HEK293T (cell line): ENCODE measurements at regions of chr4 and their contacts with region 1.

Region 1: DNA sequence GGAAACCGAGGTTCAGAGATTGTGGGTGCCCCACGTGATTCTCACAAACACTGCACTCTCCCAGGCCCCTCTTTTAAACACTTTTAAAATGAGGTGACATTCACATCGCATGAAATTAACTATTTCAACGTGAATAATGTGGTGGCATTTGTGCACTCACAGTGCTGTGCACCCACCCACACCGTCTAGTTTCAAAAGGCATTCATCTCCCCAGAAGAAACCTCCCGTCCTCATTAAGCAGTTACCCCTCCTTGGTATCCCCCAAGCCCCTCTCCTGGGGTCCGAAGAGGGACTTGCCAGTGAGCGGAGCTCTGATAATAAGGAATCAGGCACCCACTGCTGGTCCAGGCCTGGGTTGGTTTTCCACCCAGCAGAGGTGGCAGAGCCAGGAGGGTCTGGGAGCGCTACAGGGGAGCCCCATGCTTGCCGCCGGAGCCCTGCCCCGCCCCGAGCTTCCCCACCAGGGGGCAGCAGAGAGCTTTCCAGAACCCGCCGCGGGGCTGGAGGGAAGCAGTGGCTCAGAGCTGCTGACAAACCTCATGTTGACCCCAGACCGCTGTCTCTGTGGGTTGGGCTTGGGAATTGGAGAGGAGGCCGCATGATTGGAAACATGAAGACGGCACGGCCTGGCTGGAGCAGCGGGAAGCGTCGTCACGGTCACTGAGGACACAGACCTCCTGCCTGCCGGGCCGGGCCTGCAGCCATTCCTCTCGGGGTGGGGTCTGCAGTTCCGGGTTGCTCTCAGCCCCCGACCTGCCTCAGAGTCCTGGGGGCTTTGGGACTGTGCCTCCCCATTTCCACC is 27.5 kb upstream of the HTRA3 start:
- DNase-seq: peak; percentile 97

Region 2: DNA sequence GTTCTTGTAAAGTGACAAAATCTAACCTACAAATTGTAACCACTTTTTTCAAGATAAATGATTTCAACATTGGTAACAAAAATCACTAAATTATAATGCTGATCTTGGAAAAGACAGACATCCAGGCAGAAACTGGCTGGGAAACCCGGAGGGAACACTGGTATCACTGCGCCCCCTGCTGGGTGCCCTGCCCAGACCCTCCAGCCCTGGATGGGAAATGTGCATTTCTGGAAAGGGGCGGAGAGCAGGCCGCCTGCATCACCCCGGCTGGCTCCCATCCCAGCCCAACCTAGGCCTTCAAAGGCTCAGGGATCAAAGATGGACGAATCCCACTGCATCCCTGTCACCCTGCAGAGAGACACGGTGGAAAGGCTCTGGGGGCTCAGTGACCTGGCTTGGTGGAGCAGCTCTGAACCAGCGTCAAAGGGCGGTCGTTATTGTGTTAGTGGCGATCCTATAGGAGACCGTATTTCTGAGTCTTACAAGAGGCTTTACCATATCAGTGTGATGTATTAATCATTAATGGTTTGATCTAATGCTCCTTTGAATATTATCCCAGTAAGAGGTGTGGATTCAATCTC is 161.2 kb after region 1 on chr4:
- CTCF ChIA-PET with region 1: interaction called, 11 read pairs
- POLR2A ChIA-PET with region 1: interaction called, 4 read pairs
- DNase-seq: peak; percentile 88

Region 3: GRCh38 chr4:8410641-8411271 is 168.7 kb after region 1 on chr4:
- CTCF ChIA-PET with region 1: interaction called, 14 read pairs
- POLR2A ChIA-PET with region 1: no interaction called
- DNase-seq: peak; percentile 90